Head of caudate nucleus (tissue), 42 donors: ENCODE measurements at regions of chr2 and their contacts with region 1.

Region 1: GRCh38 chr2:64952511-64953482 is 36.4 kb upstream of the SLC1A4 start:
- DNase-seq: no peak

Region 2: GRCh38 chr2:64988420-64989125 is 35.8 kb after region 1 on chr2:
- intact Hi-C with region 1: loop called (anchors 5 kb)
- DNase-seq: peak in 39 of 42 donors; percentile 20 to 76 (median 56)